Ascending aorta (tissue), 2 donors: ENCODE measurements at regions of chr7 and their contacts with region 1.

Region 1: DNA sequence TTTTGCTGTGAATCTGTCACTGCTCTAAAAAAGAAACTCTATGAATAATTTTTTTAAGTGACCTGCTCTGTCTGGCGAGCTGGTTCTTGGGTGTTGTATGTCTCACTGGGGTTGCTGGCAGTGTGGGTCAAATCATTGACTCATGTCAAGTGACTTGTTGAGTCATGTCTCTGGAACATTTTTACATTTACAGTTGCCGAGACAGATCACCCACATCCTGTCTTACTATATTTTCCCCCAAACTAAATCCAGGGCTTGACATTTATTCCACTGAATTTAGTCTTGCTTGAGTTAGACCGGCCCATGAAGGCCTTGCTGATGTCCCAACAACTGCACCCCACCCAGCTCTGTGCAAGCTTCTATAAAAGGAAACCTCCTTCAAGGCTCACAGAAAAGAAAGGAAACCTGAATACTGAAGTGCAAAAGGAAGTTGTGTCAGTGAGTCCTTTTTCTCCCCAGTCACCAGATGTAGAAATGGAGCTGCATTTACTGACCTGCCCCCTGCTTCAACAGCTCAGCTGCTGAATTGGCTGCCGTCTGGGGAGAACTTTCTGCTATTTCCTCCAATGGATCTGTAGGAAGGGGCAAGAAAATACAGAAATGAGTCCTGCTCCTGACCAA is 290.3 kb downstream of the TNS3 start:
- DNase-seq: peak; percentile 42 to 84
- H3K4me3 ChIP-seq: no peak overlapping the region
- H3K27ac ChIP-seq: peak overlapping the region; percentile 79 to 86
- H3K4me1 ChIP-seq: peaks cover 0 to 20% of the 10 kb centered on the region in 2 donors
- H3K27me3 ChIP-seq: no peaks in the 10 kb centered on the region
- CTCF ChIP-seq: no peak

Region 2: DNA sequence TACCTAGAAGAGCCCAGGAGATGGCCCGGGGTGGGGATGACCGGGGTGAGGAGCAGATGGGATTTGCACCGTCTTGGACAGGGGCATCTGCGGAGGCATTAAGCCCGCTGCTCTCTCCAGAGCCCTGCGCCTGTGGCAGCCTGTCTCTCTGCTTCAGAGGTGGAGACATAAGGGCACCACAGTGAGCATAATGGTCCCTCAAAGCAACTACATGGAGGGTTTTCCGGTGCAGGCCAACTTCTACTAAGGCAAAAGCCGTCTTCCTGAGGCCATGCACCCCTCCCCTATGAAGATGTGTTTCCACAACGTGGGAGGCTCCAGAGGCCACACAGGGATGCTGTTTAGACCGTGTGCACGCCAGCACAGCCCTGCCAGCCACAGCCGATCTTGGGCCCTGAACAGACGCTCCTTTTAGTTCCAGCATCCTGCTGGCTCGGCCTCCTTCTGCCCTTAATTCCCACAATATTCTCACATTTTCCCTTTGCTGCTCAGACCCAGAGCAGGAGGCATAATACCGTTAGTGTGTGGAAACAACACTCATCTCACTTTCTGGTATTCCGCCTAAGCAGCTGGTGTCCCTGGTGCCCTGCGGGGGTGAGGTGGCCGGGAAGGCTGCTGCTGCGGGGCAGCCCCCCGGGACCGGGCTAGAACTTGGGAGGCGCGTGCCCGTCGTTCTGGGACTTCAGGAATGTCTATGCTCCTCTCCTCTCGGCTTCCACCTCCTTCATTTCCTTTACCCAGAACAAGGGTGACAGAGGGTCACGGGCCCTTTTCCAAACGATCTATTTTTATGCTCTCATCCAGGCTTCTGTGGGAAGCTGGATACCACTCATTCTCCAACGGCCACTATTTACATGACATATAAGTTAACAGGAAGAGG is 23.4 kb after region 1 on chr7:
- intact Hi-C with region 1: loop called (anchors 1 kb)
- DNase-seq: peak in 1 of 2 donors; percentile 84
- H3K4me3 ChIP-seq: peak overlapping the region; percentile 14 to 55
- H3K27ac ChIP-seq: peak overlapping the region; percentile 76 to 87
- H3K4me1 ChIP-seq: peaks cover 5 to 29% of the 10 kb centered on the region in 2 donors
- H3K27me3 ChIP-seq: no peaks in the 10 kb centered on the region
- CTCF ChIP-seq: no peak

Region 3: GRCh38 chr7:47337531-47337930 is 46.0 kb after region 1 on chr7:
- intact Hi-C with region 1: loop called (anchors 5 kb)
- DNase-seq: peak in 1 of 2 donors; percentile 30
- H3K4me3 ChIP-seq: no peak overlapping the region
- H3K27ac ChIP-seq: peak overlapping the region in 1 of 2 donors; percentile 67
- H3K4me1 ChIP-seq: peaks cover 5 to 16% of the 10 kb centered on the region in 2 donors
- H3K27me3 ChIP-seq: no peaks in the 10 kb centered on the region
- CTCF ChIP-seq: no peak

Region 4: DNA sequence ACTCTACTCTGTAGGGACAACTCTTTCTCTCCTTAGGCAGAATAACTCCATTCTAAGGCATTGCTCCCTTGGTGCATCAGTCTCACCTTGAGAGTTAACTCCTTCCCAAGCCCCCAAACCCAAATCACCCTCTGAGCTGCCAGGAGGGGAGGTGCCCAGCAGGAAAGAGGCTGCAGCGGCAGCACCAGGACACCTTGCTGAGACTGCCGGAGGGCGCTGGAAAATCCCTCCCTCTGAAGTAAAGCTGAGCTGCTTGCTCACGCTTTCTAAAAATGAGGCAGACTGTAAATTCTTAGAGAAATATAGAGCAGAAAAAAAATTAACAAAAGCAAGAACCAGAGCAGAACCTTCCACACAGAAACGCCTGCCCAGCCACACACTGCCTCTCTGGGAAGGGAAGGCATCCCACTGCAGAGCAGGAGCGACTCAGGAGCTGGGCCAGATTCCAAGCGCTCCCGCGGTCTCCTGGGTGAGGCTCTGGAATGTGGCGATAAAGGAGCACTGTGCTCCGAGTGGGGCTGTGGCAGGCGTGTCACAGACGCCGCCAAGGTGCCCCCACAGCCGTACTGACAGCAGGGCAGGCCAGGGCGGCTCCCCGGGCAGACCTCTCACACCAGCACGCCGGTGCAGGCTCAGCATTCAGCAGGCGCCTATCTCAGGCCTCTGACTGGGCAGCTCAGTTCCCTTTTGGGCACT is 88.2 kb after region 1 on chr7:
- intact Hi-C with region 1: loop called (anchors 5 kb)
- DNase-seq: peak in 1 of 2 donors; percentile 77
- H3K4me3 ChIP-seq: peak overlapping the region in 1 of 2 donors; percentile 53
- H3K27ac ChIP-seq: peak overlapping the region; percentile 69 to 75
- H3K4me1 ChIP-seq: peaks cover 7 to 11% of the 10 kb centered on the region in 2 donors
- H3K27me3 ChIP-seq: no peaks in the 10 kb centered on the region
- CTCF ChIP-seq: no peak

Region 5: DNA sequence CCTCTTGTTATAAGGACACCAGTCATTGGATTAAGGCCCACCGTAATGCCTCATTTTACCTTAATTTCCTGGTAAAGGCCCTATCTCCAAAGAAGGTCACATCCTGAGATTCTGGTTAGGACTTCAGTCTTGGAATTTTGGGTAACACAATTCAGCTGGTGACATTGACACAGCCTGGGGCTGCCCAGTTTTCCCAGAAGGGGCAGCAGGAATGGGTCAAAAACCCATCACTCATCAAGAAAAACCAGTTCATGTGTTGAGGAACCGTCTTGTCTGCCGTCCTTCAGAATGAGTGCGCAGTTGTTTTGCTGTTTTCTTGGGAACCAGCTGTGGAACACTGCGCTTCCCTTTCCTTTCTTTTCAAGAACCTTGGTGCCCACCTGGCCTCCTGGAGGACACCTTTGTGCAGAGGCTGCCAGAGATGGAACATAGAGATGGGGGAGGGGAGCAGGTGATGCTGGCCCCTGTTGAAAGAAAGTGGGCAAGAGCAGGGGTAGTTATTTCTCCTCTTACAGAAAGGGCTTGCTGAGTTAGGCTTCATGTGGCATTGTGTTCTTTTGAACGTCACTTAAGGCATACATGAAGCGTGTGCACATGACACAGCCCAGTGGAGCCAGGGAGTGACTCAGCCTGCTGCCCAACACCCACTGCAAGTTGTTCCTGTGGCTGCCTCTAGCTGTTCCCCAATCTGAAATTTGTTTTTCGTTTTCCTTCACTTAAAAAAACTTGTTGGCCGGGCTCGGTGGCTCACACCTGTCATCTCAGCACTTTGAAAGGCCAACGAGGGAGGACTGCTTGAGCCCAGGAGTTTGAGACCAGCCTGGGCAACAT is 377.7 kb after region 1 on chr7:
- intact Hi-C with region 1: no loop called
- DNase-seq: peak; percentile 74 to 92
- H3K4me3 ChIP-seq: peak overlapping the region; percentile 4 to 43
- H3K27ac ChIP-seq: peak overlapping the region; percentile 47 to 71
- H3K4me1 ChIP-seq: peaks cover 7 to 19% of the 10 kb centered on the region in 2 donors
- H3K27me3 ChIP-seq: no peaks in the 10 kb centered on the region
- CTCF ChIP-seq: peak in 1 of 3 experiments; percentile 13